Activated naive CD4-positive, alpha-beta T cell treated with anti-CD3 and anti-CD28 coated beads, Interleukin-2, amount 10 ng/mL, durations not matched to agents 7 days and 5 days (primary cell): ENCODE measurements at regions of chr2 and their contacts with region 1.

Region 1: DNA sequence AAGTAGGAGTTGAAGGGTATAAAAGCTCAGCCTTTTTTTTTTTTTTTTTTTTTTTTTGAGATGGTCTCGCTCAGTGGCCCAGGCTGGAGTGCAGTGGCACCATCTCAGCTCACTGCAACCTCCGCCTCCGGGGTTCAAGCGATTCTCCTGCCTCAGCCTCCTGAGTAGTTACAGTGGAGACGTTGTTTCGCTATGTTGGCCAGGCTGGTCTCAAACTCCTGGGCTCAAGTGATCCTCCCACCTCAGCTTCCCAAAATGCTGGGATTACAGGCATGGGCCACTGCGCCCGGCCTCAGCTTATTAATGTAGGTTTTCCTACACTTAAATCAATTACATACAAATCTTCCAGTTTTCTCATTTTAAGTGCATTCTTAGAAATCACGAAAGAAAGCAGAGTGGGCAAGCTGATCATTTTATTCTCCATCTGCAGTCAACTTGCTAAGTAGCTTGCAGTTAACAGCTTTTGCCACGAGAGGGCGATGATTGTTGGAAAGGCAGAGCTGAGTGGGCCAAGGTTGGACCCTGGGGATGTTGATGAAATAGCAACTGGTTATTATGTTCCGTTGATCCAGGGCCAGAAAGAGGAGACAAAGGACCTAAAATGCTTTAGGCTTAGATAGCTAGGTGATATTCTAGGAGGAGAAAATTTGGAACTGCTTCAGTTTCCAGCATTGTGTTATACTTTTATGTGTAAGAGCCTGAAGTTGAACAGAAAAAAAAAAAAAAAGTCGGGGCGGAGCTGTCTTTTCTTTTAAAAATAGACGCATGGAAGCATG is 234.4 kb upstream of the EPAS1 start:
- DNase-seq: peak; percentile 83
- H3K4me3 Mint-ChIP-seq: no peak overlapping the region
- H3K27ac Mint-ChIP-seq: peak overlapping the region; percentile 34
- H3K4me1 Mint-ChIP-seq: peaks cover 5% of the 10 kb centered on the region
- H3K27me3 Mint-ChIP-seq: peaks cover 9% of the 10 kb centered on the region

Region 2: GRCh38 chr2:46010925-46011490 is 51.8 kb before region 1 on chr2:
- CTCF ChIA-PET with region 1: interaction called, 10 read pairs
- DNase-seq: no peak
- H3K4me3 Mint-ChIP-seq: no peak overlapping the region
- H3K27ac Mint-ChIP-seq: no peak overlapping the region
- H3K4me1 Mint-ChIP-seq: peaks cover 6% of the 10 kb centered on the region
- H3K27me3 Mint-ChIP-seq: no peaks in the 10 kb centered on the region

Region 3: DNA sequence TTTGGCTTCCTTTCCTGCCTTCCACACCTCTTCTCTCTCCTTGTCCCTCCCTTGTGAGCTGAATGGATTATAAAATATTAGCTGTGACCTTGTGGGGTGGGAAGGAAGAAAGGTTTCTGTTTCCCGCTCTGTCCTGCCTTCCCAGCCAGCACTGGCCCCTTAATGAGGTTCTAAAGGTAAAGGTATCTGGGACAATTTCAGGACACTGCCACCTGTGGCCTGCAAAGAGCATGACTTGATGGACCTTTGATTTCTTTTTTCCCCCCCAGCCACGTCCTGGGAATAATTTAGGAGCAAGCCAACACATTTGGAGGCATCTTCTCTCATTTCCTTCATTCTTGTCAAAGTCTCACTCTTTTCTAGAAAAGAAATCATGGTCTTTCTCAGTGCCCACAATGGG is 12.3 kb before region 1 on chr2:
- CTCF ChIA-PET with region 1: interaction called, 15 read pairs
- DNase-seq: no peak
- H3K4me3 Mint-ChIP-seq: no peak overlapping the region
- H3K27ac Mint-ChIP-seq: no peak overlapping the region
- H3K4me1 Mint-ChIP-seq: peaks cover 8% of the 10 kb centered on the region
- H3K27me3 Mint-ChIP-seq: no peaks in the 10 kb centered on the region

Region 4: GRCh38 chr2:46294176-46294836 is 231.5 kb after region 1 on chr2:
- CTCF ChIA-PET with region 1: interaction called, 22 read pairs
- DNase-seq: peak; percentile 57
- H3K4me3 Mint-ChIP-seq: no peak overlapping the region
- H3K27ac Mint-ChIP-seq: no peak overlapping the region
- H3K4me1 Mint-ChIP-seq: peaks cover 23% of the 10 kb centered on the region
- H3K27me3 Mint-ChIP-seq: peaks cover 81% of the 10 kb centered on the region

Region 5: DNA sequence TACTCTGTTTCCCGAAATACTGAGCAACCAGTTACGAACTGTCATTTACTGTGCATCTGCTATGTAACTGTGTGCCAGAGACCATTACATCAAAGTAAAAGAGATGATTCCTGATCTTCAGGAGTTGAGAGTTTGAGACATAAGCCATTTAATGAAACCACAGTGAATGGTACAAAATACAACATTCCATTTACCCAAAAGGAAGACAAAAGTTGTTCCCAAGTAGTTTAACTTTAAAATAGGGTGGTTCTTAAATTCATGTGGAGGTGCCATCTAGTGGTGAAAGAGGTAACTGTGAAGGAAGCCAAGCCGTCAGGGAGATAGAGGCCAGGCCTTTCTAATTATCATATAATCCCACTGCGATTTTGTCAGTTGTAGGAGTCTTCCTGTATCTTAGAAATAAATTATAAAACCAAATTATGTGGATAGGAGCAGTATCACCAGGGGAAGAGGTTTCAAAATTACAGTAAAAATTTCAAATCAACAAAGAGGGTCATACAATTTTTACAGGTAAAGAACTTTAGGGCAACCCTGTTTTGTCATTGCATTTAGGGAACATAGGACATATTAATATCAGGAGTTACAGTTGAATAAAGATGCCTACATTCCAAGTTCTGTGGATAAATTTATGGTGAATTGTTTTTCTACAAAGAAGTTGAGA is 302.1 kb after region 1 on chr2:
- CTCF ChIA-PET with region 1: interaction called, 45 read pairs
- DNase-seq: peak; percentile 58
- H3K4me3 Mint-ChIP-seq: no peak overlapping the region
- H3K27ac Mint-ChIP-seq: no peak overlapping the region
- H3K4me1 Mint-ChIP-seq: peaks cover 55% of the 10 kb centered on the region
- H3K27me3 Mint-ChIP-seq: peaks cover 20% of the 10 kb centered on the region

Region 6: DNA sequence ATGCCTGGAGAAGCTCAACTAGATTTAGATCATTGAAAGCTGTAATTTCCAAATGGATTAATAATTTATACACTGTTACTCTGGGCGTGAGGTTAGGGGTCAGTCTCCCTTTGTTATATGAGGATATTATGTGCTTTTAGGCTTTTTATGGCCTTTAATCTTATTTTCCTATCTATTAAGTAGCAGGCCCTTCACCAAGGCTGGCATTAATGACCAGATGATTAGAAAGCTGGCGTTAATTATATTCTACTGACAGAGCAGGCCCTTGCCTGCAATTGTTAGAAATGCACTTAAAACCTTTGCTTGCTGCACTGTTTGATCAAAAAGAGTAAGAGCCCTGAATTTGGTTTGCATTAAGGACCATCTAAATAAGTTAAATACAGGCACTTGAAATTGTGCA is 309.6 kb after region 1 on chr2:
- CTCF ChIA-PET with region 1: interaction called, 45 read pairs
- DNase-seq: no peak
- H3K4me3 Mint-ChIP-seq: no peak overlapping the region
- H3K27ac Mint-ChIP-seq: no peak overlapping the region
- H3K4me1 Mint-ChIP-seq: peaks cover 20% of the 10 kb centered on the region
- H3K27me3 Mint-ChIP-seq: peaks cover 22% of the 10 kb centered on the region

Region 7: DNA sequence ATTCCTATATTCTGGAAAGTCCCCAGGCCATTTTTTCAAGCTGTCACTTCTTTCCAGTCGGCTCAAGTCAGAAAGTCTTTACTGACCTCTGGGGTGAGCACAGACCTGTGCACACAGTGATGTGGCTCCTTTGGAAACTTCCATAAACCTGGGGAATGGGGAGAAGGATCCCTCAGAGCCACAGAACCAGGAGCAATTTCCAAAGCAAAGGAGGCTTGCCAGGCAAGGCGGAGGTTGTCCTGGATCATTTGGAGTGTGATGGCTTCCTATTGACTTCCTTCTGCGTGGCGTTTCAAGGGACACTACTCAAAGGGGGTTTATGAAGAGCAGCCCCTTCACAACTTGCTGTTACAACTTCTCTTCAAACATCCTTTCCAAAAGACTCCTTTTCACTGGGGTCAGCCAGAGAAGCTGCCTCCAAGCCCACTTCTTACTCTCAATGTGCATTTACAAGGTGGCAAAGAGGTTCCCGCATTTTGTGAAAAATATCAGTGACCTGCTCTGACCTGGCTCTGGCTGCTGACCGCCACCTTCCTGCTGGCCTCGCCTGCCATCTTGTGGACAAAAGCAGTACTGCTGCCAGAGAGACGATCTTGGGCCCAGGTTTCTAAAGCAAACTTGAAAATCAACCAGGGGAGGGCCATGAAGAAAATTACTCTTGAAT is 398.3 kb after region 1 on chr2:
- CTCF ChIA-PET with region 1: interaction called, 10 read pairs
- DNase-seq: peak; percentile 81
- H3K4me3 Mint-ChIP-seq: no peak overlapping the region
- H3K27ac Mint-ChIP-seq: no peak overlapping the region
- H3K4me1 Mint-ChIP-seq: peaks cover 8% of the 10 kb centered on the region
- H3K27me3 Mint-ChIP-seq: peaks cover 6% of the 10 kb centered on the region